ENCODE measurements at regions of chr3 and their contacts with region 1.

Region 1: GRCh38 chr3:106398891-106399600 is 530.2 kb upstream of the CBLB start:
- DNase-seq: no peak
- H3K4me3 ChIP-seq: no peak overlapping the region
- H3K27ac ChIP-seq: no peak overlapping the region
- H3K4me1 ChIP-seq: no peaks in the 10 kb centered on the region
- H3K27me3 ChIP-seq: peaks cover 3% of the 10 kb centered on the region
- CTCF ChIP-seq: no peak

Region 2: DNA sequence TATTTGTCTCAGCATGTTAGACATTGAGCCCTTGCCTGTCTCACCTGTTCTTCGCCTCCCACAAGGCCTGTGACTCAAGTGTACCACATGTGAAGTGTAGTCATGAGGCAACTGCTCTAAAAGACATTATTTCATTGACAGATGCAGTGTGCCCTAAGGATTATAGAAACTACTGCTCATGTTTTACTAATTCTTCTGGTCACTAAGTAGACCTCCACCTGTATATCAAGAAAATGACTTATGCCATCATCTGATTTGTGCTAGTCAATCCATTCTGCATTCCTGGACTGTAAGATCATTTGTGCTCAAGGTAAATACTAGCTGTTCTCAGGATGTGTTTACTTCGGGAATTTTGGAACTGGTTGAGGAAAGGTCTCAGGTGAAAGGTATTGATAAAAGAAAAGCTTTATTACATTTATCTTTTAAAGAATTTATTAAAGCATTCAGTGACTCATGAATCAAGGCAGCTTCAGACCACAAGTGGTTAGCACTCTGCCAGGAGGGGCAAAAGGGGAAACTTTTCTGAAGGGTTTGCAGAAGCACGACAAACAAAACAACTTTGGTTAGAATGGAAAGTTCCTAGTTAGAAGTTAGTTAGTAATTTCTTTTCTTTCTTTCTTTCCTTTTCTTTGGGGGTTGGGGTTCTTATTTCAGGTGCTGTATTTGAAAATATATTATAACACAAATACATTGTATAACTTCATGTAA is 65.0 kb before region 1 on chr3:
- CTCF ChIA-PET with region 1: no interaction called
- dilution Hi-C with region 1: loop called (anchors 10 kb)
- in situ Hi-C with region 1: no loop called
- intact Hi-C with region 1: no loop called
- DNase-seq: peak; percentile 94
- H3K4me3 ChIP-seq: no peak overlapping the region
- H3K27ac ChIP-seq: peak overlapping the region; percentile 29
- H3K4me1 ChIP-seq: peaks cover 14% of the 10 kb centered on the region
- H3K27me3 ChIP-seq: no peaks in the 10 kb centered on the region
- CTCF ChIP-seq: no peak

Measured in mammary epithelial cell (primary cell).